ENCODE measurements at regions of chr2 and their contacts with region 1.

Region 1: GRCh38 chr2:72979896-72980295 is 62.6 kb downstream of the EMX1 start:
- DNase-seq: no peak
- ATAC-seq: no peak
- H3K4me3 ChIP-seq: no peak overlapping the region
- H3K4me3 Mint-ChIP-seq: no peak overlapping the region
- H3K27ac ChIP-seq: no peak overlapping the region
- H3K27ac Mint-ChIP-seq: no peak overlapping the region
- H3K4me1 ChIP-seq: no peaks in the 10 kb centered on the region
- H3K4me1 Mint-ChIP-seq: no peaks in the 10 kb centered on the region
- H3K27me3 ChIP-seq: no peaks in the 10 kb centered on the region
- H3K27me3 Mint-ChIP-seq: no peaks in the 10 kb centered on the region
- CTCF ChIP-seq: no peak

Region 2: DNA sequence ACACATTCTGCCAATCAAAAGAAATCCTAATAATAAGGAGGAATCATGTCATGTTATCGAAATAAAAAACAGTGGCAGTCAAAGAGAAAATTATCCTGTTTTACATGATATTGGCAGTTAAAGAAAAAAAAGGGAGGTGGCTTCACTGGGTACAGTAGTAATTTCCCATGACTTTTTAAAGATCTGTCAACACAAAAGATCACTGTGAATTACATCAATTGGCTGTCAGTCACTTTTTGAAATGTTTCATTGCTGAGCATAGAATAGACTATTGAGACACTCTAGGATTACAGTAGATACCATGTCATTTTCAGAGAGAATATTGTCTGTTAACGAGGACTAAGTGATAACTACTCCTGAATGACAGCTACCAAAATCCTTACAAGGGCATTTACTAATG is 496.6 kb before region 1 on chr2:
- CTCF ChIA-PET with region 1: no interaction called
- POLR2A ChIA-PET with region 1: no interaction called
- intact Hi-C with region 1: no loop called
- DNase-seq: no peak
- ATAC-seq: no peak
- H3K4me3 ChIP-seq: no peak overlapping the region
- H3K4me3 Mint-ChIP-seq: no peak overlapping the region
- H3K27ac ChIP-seq: no peak overlapping the region
- H3K27ac Mint-ChIP-seq: no peak overlapping the region
- H3K4me1 ChIP-seq: no peaks in the 10 kb centered on the region
- H3K4me1 Mint-ChIP-seq: no peaks in the 10 kb centered on the region
- H3K27me3 ChIP-seq: no peaks in the 10 kb centered on the region
- H3K27me3 Mint-ChIP-seq: no peaks in the 10 kb centered on the region
- CTCF ChIP-seq: no peak

Region 3: DNA sequence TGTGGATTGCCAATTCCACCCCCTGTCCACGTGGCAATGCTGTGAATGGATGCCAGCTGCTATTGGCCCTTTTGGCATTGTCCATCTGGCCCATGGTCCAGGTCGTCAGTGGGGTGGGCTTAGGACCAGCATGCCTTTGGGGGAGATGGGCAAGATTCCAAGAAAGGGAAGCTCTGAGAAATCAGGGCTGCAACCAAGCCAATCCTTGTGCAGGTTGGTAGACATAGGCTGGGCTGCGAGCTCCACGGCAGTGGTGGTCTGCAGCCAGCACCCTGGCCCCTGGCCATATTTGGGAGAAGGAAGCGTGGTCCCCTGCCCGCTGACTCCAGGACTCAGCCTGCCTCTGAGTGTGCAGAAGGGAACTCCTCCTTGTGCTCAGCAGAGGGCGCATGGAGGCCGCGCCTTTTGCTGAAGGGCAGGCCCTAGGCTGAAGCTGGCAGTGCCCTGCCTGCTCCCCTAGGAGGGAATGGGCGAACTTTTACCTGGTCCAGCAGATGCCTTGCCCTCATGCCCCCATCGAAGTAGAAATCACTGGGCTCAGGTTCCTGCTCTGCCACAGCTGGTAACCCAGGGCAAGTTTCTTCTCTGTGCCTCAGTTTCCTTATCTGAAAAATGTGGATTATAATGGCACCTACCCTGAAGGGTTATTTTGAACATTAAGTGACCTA is 87.3 kb before region 1 on chr2:
- CTCF ChIA-PET with region 1: no interaction called
- POLR2A ChIA-PET with region 1: no interaction called
- intact Hi-C with region 1: loop called in 1 of 2 experiments (anchors 5 kb)
- DNase-seq: peak in 11 of 14 experiments; percentile 22 to 76 (median 50)
- ATAC-seq: peak; percentile 78
- H3K4me3 ChIP-seq: no peak overlapping the region
- H3K4me3 Mint-ChIP-seq: no peak overlapping the region
- H3K27ac ChIP-seq: no peak overlapping the region
- H3K27ac Mint-ChIP-seq: no peak overlapping the region
- H3K4me1 ChIP-seq: peaks cover 8% of the 10 kb centered on the region
- H3K4me1 Mint-ChIP-seq: no peaks in the 10 kb centered on the region
- H3K27me3 ChIP-seq: peaks cover 52 to 63% of the 10 kb centered on the region in 2 experiments
- H3K27me3 Mint-ChIP-seq: peaks cover 94% of the 10 kb centered on the region
- CTCF ChIP-seq: peak; percentile 48

Measured in CD4-positive, alpha-beta T cell (primary cell).